PC-9 (cell line): ENCODE measurements at regions of chr5 and their contacts with region 1.

Region 1: GRCh38 chr5:60259730-60260129 is 366.2 kb upstream of the PDE4D start:
- DNase-seq: no peak
- H3K4me3 ChIP-seq: no peak overlapping the region
- H3K27ac ChIP-seq: no peak overlapping the region
- H3K4me1 ChIP-seq: no peaks in the 10 kb centered on the region
- H3K27me3 ChIP-seq: no peaks in the 10 kb centered on the region
- CTCF ChIP-seq: no peak

Region 2: DNA sequence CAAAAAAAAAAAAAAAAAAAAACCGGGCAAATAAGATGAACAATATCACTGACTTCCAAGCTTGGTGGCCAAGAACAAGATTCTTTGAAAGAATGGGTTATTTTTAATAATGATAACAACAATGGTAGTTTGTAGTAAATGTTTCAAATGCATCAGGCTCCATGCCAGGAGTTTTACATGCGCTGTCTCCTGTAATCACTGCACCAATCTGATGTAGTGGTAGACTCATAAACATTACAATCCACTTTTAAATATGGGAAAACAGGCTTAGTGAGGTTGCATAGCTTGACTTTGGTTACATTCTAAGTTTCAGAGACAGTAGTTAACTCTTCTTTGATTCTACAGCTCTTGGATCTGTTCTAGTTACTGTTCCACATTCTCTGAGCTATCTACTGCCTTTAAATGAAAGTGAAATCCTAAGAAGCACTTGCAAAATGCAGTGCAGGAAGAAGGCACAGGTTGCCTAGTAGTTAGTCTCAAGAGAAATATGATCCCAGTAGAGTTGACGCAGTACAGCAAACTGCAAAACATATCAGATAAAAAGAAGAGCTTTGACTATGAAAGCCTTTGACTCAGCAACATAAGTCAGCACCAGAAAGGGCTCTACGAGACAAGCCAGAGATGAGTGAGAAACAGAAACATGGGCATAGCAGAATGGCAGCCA is 428.3 kb before region 1 on chr5:
- CTCF ChIA-PET with region 1: no interaction called
- POLR2A ChIA-PET with region 1: no interaction called
- intact Hi-C with region 1: loop called (anchors 5 kb)
- DNase-seq: peak in 1 of 2 experiments; percentile 6
- H3K4me3 ChIP-seq: no peak overlapping the region
- H3K27ac ChIP-seq: no peak overlapping the region
- H3K4me1 ChIP-seq: no peaks in the 10 kb centered on the region
- H3K27me3 ChIP-seq: no peaks in the 10 kb centered on the region
- CTCF ChIP-seq: no peak

Region 3: GRCh38 chr5:60161340-60161934 is 98.3 kb before region 1 on chr5:
- CTCF ChIA-PET with region 1: no interaction called
- POLR2A ChIA-PET with region 1: no interaction called
- intact Hi-C with region 1: loop called (anchors 10 kb)
- DNase-seq: peak in 1 of 2 experiments; percentile 0
- H3K4me3 ChIP-seq: no peak overlapping the region
- H3K27ac ChIP-seq: no peak overlapping the region
- H3K4me1 ChIP-seq: no peaks in the 10 kb centered on the region
- H3K27me3 ChIP-seq: no peaks in the 10 kb centered on the region
- CTCF ChIP-seq: peak; percentile 60